Mammary epithelial cell (primary cell): ENCODE measurements at regions of chr17 and their contacts with region 1.

Region 1: GRCh38 chr17:43483674-43484372 is at the start of gene DHX8:
- DNase-seq: peak; percentile 98
- H3K4me3 ChIP-seq: peak within 1 kb of the TSS; percentile 67 to 89 (median 78)
- H3K27ac ChIP-seq: peak within 1 kb of the TSS; percentile 80
- H3K4me1 ChIP-seq: peaks cover 15% of the 10 kb centered on the region
- H3K27me3 ChIP-seq: no peaks in the 10 kb centered on the region
- CTCF ChIP-seq: peak; percentile 100
- total RNA-seq, gene DHX8: 41.3 to 58.8 TPM

Region 2: DNA sequence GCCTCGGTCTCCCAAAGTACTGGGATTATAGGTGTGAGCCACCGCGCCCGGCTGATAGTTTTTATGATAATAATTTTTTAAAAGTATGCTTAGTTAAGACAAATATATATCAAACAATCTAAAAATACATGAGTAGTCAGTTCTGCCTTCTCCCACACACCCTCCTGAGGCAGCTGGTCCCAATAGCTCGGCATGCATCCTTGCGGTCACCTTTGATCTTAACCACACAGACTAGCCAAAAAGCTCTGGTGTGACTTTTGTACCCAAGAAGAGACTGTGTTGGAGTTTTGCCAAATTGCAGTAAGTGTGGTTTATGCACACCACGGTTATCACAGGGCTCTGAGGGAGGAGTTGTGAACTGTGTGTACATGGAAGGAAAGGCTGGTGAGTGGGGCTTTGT is 999.5 kb before region 1 on chr17:
- CTCF ChIA-PET with region 1: no interaction called
- dilution Hi-C with region 1: no loop called
- in situ Hi-C with region 1: no loop called
- intact Hi-C with region 1: no loop called
- DNase-seq: no peak
- H3K4me3 ChIP-seq: no peak overlapping the region
- H3K27ac ChIP-seq: no peak overlapping the region
- H3K4me1 ChIP-seq: no peaks in the 10 kb centered on the region
- H3K27me3 ChIP-seq: no peaks in the 10 kb centered on the region
- CTCF ChIP-seq: no peak

Region 3: DNA sequence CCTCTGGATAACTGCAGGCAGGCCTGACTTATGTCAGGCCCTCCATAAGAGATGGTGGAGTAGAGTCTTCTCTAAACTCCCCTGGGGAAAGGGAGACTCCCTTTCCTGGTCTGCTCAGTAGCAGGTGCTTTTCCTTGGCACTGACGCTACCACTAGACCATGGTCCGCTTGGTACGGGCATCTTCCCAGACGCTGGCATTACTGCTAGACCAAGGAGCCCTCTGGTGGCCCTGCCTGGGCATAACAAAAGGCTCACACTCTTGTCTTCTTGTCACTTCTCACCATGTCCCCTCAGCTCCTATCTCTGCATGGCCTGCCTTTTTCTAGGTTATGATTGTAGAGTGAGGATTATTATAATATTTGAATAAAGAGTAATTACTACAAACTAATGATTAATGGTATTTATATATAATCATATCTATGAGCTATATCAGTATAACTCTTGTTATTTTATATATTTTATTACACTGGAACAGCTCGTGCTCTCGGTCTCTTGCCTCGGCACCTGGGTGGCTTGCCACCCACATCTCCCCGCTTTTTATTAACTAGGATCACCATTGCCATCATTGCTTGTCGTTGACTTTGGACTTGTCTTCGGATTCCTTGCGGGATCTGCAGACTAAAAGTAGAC is 144.8 kb before region 1 on chr17:
- CTCF ChIA-PET with region 1: no interaction called
- dilution Hi-C with region 1: no loop called
- in situ Hi-C with region 1: loop called in 1 of 2 experiments (anchors 25 kb)
- intact Hi-C with region 1: no loop called
- DNase-seq: peak; percentile 23
- H3K4me3 ChIP-seq: no peak overlapping the region
- H3K27ac ChIP-seq: no peak overlapping the region
- H3K4me1 ChIP-seq: no peaks in the 10 kb centered on the region
- H3K27me3 ChIP-seq: no peaks in the 10 kb centered on the region
- CTCF ChIP-seq: peak; percentile 37 to 81

Region 4: DNA sequence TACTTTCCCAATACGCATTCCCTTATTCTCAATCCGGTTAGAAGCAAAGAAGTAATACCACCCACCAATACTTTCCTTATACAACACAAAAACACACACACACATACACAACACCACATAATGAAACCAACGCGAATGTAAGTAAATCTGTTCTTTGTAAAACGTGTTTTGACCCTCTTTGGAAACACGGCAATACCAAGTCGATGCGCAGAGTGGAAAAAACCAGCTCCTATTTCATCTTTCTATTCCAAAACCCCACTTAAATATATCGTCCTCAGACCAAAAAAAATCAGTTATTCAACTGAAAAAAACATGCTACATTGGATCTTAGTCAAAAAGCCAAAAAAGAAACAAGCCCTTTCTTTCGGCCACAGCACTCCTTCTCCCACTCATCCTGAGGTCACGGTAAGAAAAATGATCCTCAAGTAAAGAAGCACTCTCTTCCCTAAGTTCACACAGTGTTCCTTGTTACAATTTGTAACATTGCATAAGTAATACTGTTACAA is 116.0 kb before region 1 on chr17:
- CTCF ChIA-PET with region 1: interaction called, 8 read pairs
- dilution Hi-C with region 1: no loop called
- in situ Hi-C with region 1: no loop called
- intact Hi-C with region 1: loop called (anchors 1 kb)
- DNase-seq: peak; percentile 99
- H3K4me3 ChIP-seq: no peak overlapping the region
- H3K27ac ChIP-seq: peak overlapping the region; percentile 99
- H3K4me1 ChIP-seq: peaks cover 21% of the 10 kb centered on the region
- H3K27me3 ChIP-seq: no peaks in the 10 kb centered on the region
- CTCF ChIP-seq: no peak

Region 5: GRCh38 chr17:43388359-43389045 is 95.3 kb before region 1 on chr17:
- CTCF ChIA-PET with region 1: interaction called, 14 read pairs
- dilution Hi-C with region 1: no loop called
- in situ Hi-C with region 1: loop called in 1 of 2 experiments (anchors 5 kb)
- intact Hi-C with region 1: loop called (anchors 1 kb)
- DNase-seq: peak; percentile 91
- H3K4me3 ChIP-seq: peak overlapping the region; percentile 43 to 71 (median 58)
- H3K27ac ChIP-seq: peak overlapping the region; percentile 93
- H3K4me1 ChIP-seq: peaks cover 22% of the 10 kb centered on the region
- H3K27me3 ChIP-seq: no peaks in the 10 kb centered on the region
- CTCF ChIP-seq: no peak

Region 6: GRCh38 chr17:43393944-43394482 is 89.8 kb before region 1 on chr17:
- CTCF ChIA-PET with region 1: interaction called, 15 read pairs
- dilution Hi-C with region 1: no loop called
- in situ Hi-C with region 1: loop called in 1 of 2 experiments (anchors 5 kb)
- intact Hi-C with region 1: loop called (anchors 1 kb)
- DNase-seq: peak; percentile 68
- H3K4me3 ChIP-seq: no peak overlapping the region
- H3K27ac ChIP-seq: no peak overlapping the region
- H3K4me1 ChIP-seq: peaks cover 11% of the 10 kb centered on the region
- H3K27me3 ChIP-seq: no peaks in the 10 kb centered on the region
- CTCF ChIP-seq: peak; percentile 84 to 89

Region 7: DNA sequence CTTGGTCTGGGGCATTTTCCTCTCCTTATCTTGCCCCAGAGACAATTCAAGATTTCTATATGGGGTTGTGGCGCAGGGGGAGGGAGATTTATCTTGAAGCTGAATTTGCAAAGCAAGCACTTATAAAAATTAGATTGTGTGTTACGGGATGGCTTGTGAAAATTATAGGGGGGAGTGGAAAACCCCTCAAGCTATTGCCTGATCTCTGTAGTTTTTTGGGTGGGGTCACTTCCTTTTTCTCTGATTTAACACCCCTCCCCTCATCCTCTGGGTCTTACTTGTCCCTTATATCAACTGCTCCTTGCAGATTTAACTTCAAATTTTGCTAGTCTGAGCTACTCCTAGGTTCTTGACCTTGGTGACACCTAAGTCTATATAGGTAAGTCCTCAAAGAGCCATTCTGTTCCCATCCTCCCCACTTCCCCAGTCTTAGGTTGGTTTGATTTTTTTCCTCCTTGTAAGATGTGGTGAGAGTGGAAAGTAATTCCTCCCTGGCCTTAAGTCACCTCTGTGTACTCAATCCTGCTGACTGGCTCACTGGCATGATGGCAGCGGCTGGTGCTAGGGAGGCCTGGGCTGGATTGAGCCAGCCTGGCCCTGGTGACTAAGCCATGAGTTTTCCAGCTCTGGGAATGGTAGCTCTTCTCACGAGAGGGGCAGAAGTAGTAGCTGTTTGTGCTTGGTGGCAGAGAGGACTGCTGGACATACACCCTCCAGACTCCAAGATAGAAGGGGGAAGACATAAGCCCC is 82.7 kb before region 1 on chr17:
- CTCF ChIA-PET with region 1: interaction called, 15 read pairs
- dilution Hi-C with region 1: no loop called
- in situ Hi-C with region 1: no loop called
- intact Hi-C with region 1: no loop called
- DNase-seq: peak; percentile 93
- H3K4me3 ChIP-seq: peak overlapping the region; percentile 73 to 96 (median 82)
- H3K27ac ChIP-seq: peak overlapping the region; percentile 64
- H3K4me1 ChIP-seq: peaks cover 36% of the 10 kb centered on the region
- H3K27me3 ChIP-seq: no peaks in the 10 kb centered on the region
- CTCF ChIP-seq: no peak